ENCODE measurements at regions of chr11 and their contacts with region 1.

Region 1: GRCh38 chr11:35178873-35179272 is 39.9 kb downstream of the CD44 start:
- DNase-seq: no peak
- H3K4me3 ChIP-seq: no peak overlapping the region
- H3K27ac ChIP-seq: no peak overlapping the region
- H3K4me1 ChIP-seq: peaks cover 3 to 17% (median 6%) of the 10 kb centered on the region in 4 experiments; a peak in 6 of 7 replicates
- H3K27me3 ChIP-seq: no peaks in the 10 kb centered on the region
- CTCF ChIP-seq: no peak
- EP300 ChIP-seq: no peak
- POLR2A ChIP-seq: no peak
- RAD21 ChIP-seq: no peak

Region 2: GRCh38 chr11:35165423-35166368 is 13.2 kb before region 1 on chr11:
- CTCF ChIA-PET with region 1: interaction called, 12 read pairs
- POLR2A ChIA-PET with region 1: no interaction called
- DNase-seq: no peak
- H3K4me3 ChIP-seq: no peak overlapping the region
- H3K27ac ChIP-seq: no peak overlapping the region
- H3K4me1 ChIP-seq: peaks cover 2 to 9% (median 6%) of the 10 kb centered on the region in 4 experiments; a peak in 5 of 7 replicates
- H3K27me3 ChIP-seq: no peaks in the 10 kb centered on the region
- CTCF ChIP-seq: no peak
- EP300 ChIP-seq: no peak
- POLR2A ChIP-seq: no peak
- RAD21 ChIP-seq: no peak

Measured in H1 (cell line).